ENCODE measurements at regions of chr3 and their contacts with region 1.

Region 1: GRCh38 chr3:159804726-159805410 is 183.8 kb upstream of the IL12A start:
- DNase-seq: peak; percentile 92
- H3K4me3 ChIP-seq: peak overlapping the region in 2 of 4 donors; percentile 9 to 22
- H3K27ac ChIP-seq: peak overlapping the region; percentile 62 to 90 (median 84)
- H3K4me1 ChIP-seq: peaks cover 45 to 88% (median 85%) of the 10 kb centered on the region in 4 donors
- H3K27me3 ChIP-seq: no peaks in the 10 kb centered on the region
- CTCF ChIP-seq: peak; percentile 82 to 91 (median 89)
- EP300 ChIP-seq: peak; percentile 59
- POLR2A ChIP-seq: no peak

Region 2: DNA sequence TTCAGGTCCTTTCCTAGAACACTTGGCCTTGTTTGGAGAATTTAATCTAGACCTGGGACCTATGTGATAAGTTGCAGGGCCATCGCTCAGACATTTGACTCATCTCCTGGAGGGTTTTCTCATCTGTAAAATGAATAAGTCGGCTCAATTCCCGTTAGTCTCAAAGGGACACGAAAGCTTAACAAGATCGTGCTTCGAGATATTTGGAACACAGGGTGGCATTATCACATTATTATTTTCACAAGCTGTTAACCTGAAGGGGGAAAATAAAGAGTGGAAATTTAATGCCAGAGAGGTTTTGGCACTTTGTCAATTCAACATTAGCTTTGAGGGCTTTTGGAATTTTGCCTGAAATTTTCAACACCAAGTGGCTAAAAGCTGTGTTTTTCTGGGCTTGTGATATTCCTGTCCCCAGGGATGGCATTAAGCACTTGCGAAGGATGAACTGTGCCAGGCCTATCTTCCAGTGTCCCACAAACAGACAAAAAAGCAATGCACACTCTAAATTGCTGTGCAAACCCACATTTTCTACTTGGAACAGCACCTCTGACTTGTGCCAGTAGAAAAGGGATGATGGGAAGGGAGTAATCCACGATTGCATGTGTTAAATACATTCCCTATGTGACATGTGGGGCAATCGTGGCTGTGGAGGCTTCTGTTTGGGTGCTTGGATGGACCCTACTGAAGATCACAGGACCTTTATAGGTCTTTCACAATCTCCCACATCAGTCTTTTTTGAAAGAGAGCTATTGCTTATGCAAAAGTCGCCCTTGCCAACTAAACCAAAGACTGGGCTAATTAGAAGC is 524.3 kb before region 1 on chr3:
- intact Hi-C with region 1: no loop called
- DNase-seq: no peak
- H3K4me3 ChIP-seq: no peak overlapping the region
- H3K27ac ChIP-seq: no peak overlapping the region
- H3K4me1 ChIP-seq: no peaks in the 10 kb centered on the region
- H3K27me3 ChIP-seq: no peaks in the 10 kb centered on the region
- CTCF ChIP-seq: no peak
- EP300 ChIP-seq: no peak
- POLR2A ChIP-seq: no peak

Region 3: DNA sequence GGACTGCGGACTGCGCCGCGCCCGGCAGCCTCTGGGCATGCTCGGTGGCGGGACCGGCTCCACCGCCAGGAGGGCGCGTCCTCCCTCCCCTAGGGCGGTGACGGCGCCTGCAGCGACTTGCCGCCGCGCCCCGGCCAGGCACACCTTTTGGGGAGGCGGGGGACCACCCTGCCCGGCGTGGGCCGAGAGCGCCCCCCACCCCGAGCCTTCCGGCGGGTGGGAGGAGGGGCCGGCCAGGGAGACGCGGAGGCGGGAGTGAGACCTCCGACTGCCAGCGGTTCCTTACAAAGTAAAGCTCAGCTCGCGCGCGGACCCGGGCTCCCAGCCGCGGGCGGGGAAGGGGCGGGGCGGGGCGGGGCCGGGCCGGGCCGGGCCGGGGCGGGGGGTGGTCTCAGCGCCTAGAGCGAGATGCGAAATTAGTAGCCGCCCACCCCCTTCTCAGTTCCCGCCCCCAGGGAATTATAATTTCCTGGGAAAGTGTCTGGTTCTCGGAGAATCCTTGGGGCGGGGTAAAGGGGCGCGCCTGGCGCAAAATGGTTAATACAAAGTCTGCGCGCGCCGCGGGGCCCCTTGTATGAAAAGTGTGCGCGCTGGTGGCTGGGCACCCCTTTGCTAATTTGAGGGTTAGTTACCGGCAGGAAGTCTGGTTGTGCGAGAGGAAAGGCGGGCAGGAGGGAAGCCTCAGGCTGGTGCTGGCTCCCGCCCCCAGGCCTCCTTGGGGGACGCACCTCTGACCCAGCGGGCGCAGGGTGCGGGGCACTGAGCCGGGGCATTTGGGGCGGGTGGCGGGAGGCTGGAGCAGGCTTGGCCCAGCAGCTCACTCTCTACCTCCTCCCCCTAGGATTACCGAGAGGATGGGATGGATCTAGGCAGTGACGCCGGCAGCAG is 41.0 kb before region 1 on chr3:
- intact Hi-C with region 1: loop called (anchors 2 kb)
- DNase-seq: no peak
- H3K4me3 ChIP-seq: peak overlapping the region; percentile 84 to 95 (median 84)
- H3K27ac ChIP-seq: peak overlapping the region; percentile 97 to 100 (median 98)
- H3K4me1 ChIP-seq: peaks cover 44 to 61% (median 58%) of the 10 kb centered on the region in 4 donors
- H3K27me3 ChIP-seq: no peaks in the 10 kb centered on the region
- CTCF ChIP-seq: peak in 2 of 3 experiments; percentile 22 to 49
- EP300 ChIP-seq: peak; percentile 23
- POLR2A ChIP-seq: no peak

Region 4: DNA sequence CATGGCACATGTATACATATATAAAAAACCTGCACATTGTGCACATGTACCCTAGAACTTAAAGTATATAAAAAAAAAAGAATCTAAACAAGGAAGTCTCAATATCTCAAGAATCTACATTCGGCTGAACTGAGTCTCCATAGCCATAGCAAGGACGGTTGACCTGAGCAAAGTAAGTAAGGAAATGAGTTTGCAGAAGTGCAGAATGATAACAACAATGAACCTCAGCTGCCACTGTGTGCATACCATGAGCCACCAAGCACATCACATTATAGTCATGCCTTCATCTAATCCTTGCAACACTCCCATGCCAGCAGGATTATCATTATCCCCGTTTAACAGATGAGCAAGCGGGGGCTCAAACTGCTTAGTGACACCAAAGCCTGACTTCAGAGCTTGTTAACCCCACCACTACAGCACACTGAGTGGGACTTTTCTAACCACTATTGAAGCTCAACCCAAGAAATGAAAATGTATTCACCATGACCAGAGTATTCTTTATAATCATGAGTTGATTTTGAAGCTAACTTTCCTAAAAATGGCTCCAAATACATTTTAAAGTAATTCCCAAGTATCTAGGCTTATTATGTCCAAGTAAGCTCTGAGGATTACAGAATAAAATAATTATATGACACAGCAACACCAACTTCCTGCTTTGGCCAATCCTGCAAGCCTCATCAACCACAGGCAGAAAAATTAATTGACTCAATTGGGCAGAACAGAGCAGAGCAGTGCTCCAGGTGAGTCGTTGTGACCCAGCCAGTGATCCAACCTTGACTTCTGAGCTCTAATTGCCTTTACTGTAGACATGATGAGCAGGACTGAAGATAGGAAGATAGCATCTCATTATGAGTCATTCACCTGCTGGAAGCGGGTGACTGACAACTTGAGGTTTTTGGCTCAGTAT is 136.4 kb after region 1 on chr3:
- intact Hi-C with region 1: no loop called
- DNase-seq: peak; percentile 64
- H3K4me3 ChIP-seq: no peak overlapping the region
- H3K27ac ChIP-seq: no peak overlapping the region
- H3K4me1 ChIP-seq: no peaks in the 10 kb centered on the region
- H3K27me3 ChIP-seq: no peaks in the 10 kb centered on the region
- CTCF ChIP-seq: no peak
- EP300 ChIP-seq: no peak
- POLR2A ChIP-seq: no peak